Activated T-helper 2 cell treated with anti-CD3 and anti-CD28 coated beads, Interferon-gamma antibody, Interleukin-2, Interleukin-4, amounts not matched to agents 10 μg/mL and 5 μg/mL and 100 μg/mL, durations not matched to agents 14 hours and 24 hours and 36 hours (primary cell): ENCODE measurements at regions of chr16 and their contacts with region 1.

Region 1: DNA sequence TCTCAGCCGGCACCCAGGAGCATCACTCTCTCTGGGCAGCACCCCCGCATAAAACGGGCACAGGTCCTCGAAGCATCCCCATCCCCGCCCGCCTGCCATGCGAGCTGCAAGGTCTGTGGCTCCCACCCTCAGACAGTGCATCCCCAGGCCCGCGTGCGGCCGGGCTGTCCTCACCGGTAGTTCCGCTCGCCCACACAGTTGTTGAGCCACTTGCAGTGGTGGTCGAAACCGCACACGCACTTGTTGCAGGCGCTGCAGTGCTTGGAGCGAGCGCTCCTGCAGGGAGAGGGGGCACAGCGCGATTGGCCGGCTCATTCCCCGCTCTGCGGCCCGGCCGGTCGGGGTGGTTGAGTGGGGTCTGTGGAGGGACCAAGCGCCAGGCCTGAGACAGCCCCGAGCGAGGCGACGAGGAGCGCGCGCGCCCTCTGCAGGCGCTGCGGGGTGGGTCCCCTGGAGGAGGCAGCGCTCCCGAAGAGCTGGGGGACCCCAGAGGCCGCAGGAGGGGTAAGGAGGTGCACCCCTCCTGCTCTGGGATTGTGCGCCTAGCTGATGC is 6.0 kb upstream of the TPPP3 start:
- DNase-seq: peak; percentile 36
- H3K4me3 Mint-ChIP-seq: no peak overlapping the region
- H3K27ac Mint-ChIP-seq: no peak overlapping the region
- H3K4me1 Mint-ChIP-seq: peaks cover under 1% of the 10 kb centered on the region
- H3K27me3 Mint-ChIP-seq: peaks cover 21% of the 10 kb centered on the region

Region 2: GRCh38 chr16:67260426-67261075 is 138.7 kb before region 1 on chr16:
- intact Hi-C with region 1: loop called (anchors 5 kb)
- DNase-seq: no peak
- H3K4me3 Mint-ChIP-seq: no peak overlapping the region
- H3K27ac Mint-ChIP-seq: no peak overlapping the region
- H3K4me1 Mint-ChIP-seq: peaks cover 4% of the 10 kb centered on the region
- H3K27me3 Mint-ChIP-seq: no peaks in the 10 kb centered on the region

Region 3: DNA sequence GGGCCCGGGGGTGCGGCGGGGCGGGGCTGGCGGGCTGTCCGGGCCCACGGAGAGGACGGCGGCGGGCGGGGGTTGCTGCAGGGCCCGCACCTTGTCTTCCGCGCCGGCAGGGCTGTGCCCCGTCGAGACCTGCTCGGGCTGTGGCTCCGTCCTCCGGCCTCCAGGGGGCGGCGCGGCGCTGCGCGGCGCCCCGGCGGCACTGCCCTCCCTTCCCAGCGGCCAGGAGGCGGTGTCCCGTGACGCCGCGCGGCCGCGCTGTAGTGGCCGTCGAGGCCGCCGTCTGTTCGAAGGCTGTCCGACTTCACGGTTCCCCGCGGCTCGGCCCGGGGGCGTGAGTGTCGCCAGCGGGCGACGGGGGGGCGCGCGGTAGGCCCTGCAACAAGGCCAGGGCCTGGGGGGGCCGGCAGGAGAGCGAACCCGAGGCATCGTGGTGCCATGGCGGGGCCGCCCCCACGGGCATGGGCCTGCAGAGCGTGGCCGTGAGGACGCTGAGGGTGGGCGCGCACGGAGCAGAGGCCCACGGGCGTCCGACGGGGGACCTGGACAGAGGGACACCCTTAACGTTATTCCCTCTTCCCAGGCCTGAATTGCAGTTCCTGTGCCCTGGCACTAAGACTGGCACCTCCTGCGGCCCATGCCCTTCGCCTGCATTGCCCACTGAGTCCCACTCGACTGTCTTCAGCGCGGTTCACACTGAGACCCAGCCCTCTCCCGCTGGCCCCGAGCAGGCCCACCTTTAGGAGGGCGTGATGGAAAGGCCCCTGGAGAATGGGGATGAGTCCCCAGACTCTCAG is 119.8 kb before region 1 on chr16 and contains the start of gene PLEKHG4:
- intact Hi-C with region 1: loop called (anchors 1 kb)
- DNase-seq: peak; percentile 77
- H3K4me3 Mint-ChIP-seq: peak within 1 kb of the TSS; percentile 84
- H3K27ac Mint-ChIP-seq: peak within 1 kb of the TSS; percentile 86
- H3K4me1 Mint-ChIP-seq: peaks cover 24% of the 10 kb centered on the region
- H3K27me3 Mint-ChIP-seq: no peaks in the 10 kb centered on the region
- total RNA-seq, gene PLEKHG4: 30.4 and 33.4 TPM in 2 replicates

Region 4: DNA sequence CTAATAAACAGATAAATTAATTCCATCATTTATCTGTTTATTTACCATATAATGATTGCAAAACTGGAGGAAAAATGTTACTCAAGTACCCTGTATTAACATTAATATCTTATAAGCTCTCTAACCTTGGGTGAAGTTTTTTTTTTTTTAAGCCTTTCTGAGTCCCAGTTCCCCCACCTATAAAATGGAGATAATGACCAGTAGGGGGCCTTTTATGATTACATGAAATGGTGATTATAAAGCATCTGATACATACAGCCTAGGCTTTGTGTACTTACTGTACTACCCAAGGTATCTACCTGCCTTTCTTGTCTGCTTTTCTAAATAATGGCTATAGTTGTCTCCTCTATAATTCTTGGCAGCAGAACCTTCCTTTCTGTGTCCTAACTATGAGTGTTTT is 50.1 kb before region 1 on chr16:
- intact Hi-C with region 1: loop called (anchors 5 kb)
- DNase-seq: no peak
- H3K4me3 Mint-ChIP-seq: no peak overlapping the region
- H3K27ac Mint-ChIP-seq: no peak overlapping the region
- H3K4me1 Mint-ChIP-seq: no peaks in the 10 kb centered on the region
- H3K27me3 Mint-ChIP-seq: peaks cover 24% of the 10 kb centered on the region

Region 5: GRCh38 chr16:67456391-67457081 is 57.3 kb after region 1 on chr16:
- intact Hi-C with region 1: no loop called
- DNase-seq: no peak
- H3K4me3 Mint-ChIP-seq: no peak overlapping the region
- H3K27ac Mint-ChIP-seq: peak overlapping the region; percentile 6
- H3K4me1 Mint-ChIP-seq: no peaks in the 10 kb centered on the region
- H3K27me3 Mint-ChIP-seq: no peaks in the 10 kb centered on the region